IMR-90 (cell line): ENCODE measurements at regions of chr9 and their contacts with region 1.

Region 1: GRCh38 chr9:14616188-14616982 is 76.8 kb downstream of the ZDHHC21 start:
- DNase-seq: peak; percentile 73
- ATAC-seq: peak; percentile 82
- H3K4me3 ChIP-seq: no peak overlapping the region
- H3K27ac ChIP-seq: no peak overlapping the region
- H3K4me1 ChIP-seq: no peaks in the 10 kb centered on the region
- H3K27me3 ChIP-seq: no peaks in the 10 kb centered on the region
- CTCF ChIP-seq: peak; percentile 74
- POLR2A ChIP-seq: no peak
- RAD21 ChIP-seq: peak; percentile 71

Region 2: GRCh38 chr9:14652729-14653377 is 36.5 kb after region 1 on chr9:
- CTCF ChIA-PET with region 1: interaction called, 8 read pairs
- POLR2A ChIA-PET with region 1: no interaction called
- dilution Hi-C with region 1: no loop called
- in situ Hi-C with region 1: no loop called
- intact Hi-C with region 1: loop called (anchors 1 kb)
- DNase-seq: peak; percentile 24
- ATAC-seq: peak; percentile 84
- H3K4me3 ChIP-seq: no peak overlapping the region
- H3K27ac ChIP-seq: no peak overlapping the region
- H3K4me1 ChIP-seq: no peaks in the 10 kb centered on the region
- H3K27me3 ChIP-seq: no peaks in the 10 kb centered on the region
- CTCF ChIP-seq: peak; percentile 59
- POLR2A ChIP-seq: no peak
- RAD21 ChIP-seq: peak; percentile 57

Region 3: GRCh38 chr9:14661421-14662059 is 45.2 kb after region 1 on chr9:
- CTCF ChIA-PET with region 1: no interaction called
- POLR2A ChIA-PET with region 1: no interaction called
- dilution Hi-C with region 1: no loop called
- in situ Hi-C with region 1: no loop called
- intact Hi-C with region 1: loop called (anchors 1 kb)
- DNase-seq: peak; percentile 43
- ATAC-seq: peak; percentile 68
- H3K4me3 ChIP-seq: no peak overlapping the region
- H3K27ac ChIP-seq: no peak overlapping the region
- H3K4me1 ChIP-seq: no peaks in the 10 kb centered on the region
- H3K27me3 ChIP-seq: no peaks in the 10 kb centered on the region
- CTCF ChIP-seq: peak; percentile 59
- POLR2A ChIP-seq: no peak
- RAD21 ChIP-seq: peak; percentile 53

Region 4: GRCh38 chr9:14761584-14761983 is 145.2 kb after region 1 on chr9:
- CTCF ChIA-PET with region 1: no interaction called
- POLR2A ChIA-PET with region 1: no interaction called
- dilution Hi-C with region 1: no loop called
- in situ Hi-C with region 1: loop called (anchors 5 kb)
- intact Hi-C with region 1: no loop called
- DNase-seq: no peak
- ATAC-seq: no peak
- H3K4me3 ChIP-seq: no peak overlapping the region
- H3K27ac ChIP-seq: no peak overlapping the region
- H3K4me1 ChIP-seq: no peaks in the 10 kb centered on the region
- H3K27me3 ChIP-seq: no peaks in the 10 kb centered on the region
- CTCF ChIP-seq: no peak
- POLR2A ChIP-seq: no peak
- RAD21 ChIP-seq: no peak

Region 5: GRCh38 chr9:14768405-14769229 is 152.2 kb after region 1 on chr9:
- CTCF ChIA-PET with region 1: interaction called, 4 read pairs
- POLR2A ChIA-PET with region 1: no interaction called
- dilution Hi-C with region 1: no loop called
- in situ Hi-C with region 1: loop called (anchors 5 kb)
- intact Hi-C with region 1: loop called (anchors 1 kb)
- DNase-seq: peak; percentile 51
- ATAC-seq: peak; percentile 75
- H3K4me3 ChIP-seq: no peak overlapping the region
- H3K27ac ChIP-seq: no peak overlapping the region
- H3K4me1 ChIP-seq: no peaks in the 10 kb centered on the region
- H3K27me3 ChIP-seq: no peaks in the 10 kb centered on the region
- CTCF ChIP-seq: peak; percentile 72
- POLR2A ChIP-seq: no peak
- RAD21 ChIP-seq: peak; percentile 73